Activated naive CD4-positive, alpha-beta T cell treated with anti-CD3 and anti-CD28 coated beads, Interleukin-2, amount 10 ng/mL, durations not matched to agents 7 days and 5 days (primary cell): ENCODE measurements at regions of chr2 and their contacts with region 1.

Region 1: DNA sequence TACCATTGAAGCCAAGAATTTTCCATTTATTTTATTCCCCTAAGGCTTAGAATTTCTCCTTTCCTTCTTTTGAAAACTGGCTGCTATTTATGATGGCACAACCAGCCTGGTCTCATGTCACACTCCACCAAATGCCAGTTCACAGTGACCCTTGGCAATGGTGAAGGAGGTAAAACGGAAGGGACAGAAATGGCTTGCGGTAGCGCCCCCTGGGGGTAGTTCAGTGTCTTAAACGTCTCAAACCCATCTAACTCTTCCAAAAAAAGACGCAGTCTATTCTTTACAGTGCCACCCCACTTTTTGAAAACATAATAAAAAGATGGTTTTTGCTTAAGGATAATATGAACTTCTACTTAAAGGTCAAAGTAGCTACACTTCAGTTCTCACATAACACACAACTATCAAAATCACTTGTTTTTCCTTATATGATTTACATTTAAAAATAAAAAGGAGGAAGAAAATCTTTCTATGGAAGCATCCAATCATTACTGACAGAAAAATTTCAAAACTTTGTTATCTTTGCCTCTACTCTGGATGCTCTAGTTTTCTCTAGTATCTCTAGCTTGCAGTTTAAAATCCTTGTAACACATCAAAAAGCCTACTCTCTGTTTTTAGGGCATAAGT is 28.0 kb downstream of the PNO1 start:
- DNase-seq: peak; percentile 67
- H3K4me3 Mint-ChIP-seq: no peak overlapping the region
- H3K27ac Mint-ChIP-seq: peak overlapping the region; percentile 42
- H3K4me1 Mint-ChIP-seq: peaks cover 12% of the 10 kb centered on the region
- H3K27me3 Mint-ChIP-seq: no peaks in the 10 kb centered on the region

Region 2: DNA sequence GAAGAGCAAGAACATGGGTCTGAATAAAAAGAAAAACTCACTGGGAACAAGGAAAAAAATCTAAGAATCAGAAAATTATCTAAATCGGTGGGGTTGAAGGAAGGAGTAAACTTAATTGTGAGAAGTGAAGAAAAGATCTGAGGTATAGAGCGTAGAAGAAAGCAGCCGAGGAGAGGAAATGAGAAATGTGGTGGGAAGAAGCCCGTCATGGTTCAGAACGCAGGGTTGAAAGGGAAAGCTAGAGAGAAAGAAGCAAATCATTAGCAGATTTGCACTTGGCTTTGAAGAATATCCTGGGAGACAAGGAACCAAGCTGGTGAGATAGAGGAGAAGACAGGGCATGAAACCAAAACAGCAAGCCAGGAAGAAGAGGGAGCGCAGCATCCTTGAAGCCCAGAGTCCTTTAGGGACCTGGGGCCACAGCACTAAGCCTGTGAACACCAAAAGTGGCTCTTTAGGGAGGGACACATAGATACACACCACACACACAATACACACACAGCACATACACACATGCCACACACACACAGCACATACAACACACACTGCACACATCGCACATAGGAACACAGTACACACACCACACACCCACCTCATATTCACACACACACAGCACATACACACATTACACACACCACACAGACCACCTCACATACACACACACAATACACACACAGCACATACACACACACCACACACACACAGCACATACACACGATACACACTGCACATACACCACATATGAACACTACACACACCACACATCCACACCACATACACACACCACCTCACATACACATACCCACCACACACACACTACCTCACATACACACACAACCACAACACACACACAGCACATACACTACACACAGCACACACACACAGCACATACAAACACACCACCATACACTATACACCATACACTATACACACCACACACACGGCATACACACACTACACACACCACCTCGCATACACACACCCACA is 513.9 kb before region 1 on chr2:
- CTCF ChIA-PET with region 1: no interaction called
- DNase-seq: no peak
- H3K4me3 Mint-ChIP-seq: no peak overlapping the region
- H3K27ac Mint-ChIP-seq: no peak overlapping the region
- H3K4me1 Mint-ChIP-seq: no peaks in the 10 kb centered on the region
- H3K27me3 Mint-ChIP-seq: no peaks in the 10 kb centered on the region

Region 3: DNA sequence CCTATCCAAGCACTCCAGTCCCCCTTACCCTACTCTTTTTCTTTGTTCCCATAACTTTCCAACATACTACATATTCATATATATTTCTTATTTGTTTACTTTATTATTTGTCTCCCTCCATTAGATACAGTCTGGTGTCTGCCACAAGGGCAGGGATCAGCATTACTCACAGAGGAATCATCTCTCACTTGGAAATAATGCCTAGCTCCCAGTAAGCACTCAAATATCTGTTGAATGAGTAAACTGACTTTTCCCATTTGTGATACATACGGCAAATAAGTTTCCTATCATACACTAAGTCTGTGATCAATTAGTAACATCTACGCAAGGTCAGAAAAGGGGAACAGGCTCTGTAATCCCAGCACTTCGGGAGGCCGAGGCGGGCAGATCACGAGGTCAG is 141.6 kb before region 1 on chr2:
- CTCF ChIA-PET with region 1: no interaction called
- DNase-seq: no peak
- H3K4me3 Mint-ChIP-seq: no peak overlapping the region
- H3K27ac Mint-ChIP-seq: no peak overlapping the region
- H3K4me1 Mint-ChIP-seq: no peaks in the 10 kb centered on the region
- H3K27me3 Mint-ChIP-seq: no peaks in the 10 kb centered on the region

Region 4: DNA sequence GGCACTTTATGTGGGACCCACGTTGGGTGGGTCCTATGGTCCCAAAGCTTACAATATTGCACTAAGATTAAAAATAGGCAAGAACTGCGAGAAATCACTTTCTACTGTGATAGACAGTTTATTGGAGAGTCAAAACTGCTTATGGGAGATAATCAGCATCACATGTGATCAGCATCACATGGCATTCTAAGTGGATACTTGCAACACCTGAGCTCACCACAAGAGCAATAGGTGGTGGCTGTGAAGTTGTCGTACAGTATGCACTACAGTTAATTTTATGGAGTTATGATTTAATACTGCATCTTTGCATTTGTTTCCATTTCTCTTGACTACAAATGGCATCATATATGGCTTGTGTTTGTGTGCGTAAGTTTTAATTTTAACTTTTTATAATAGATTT is 16.4 kb before region 1 on chr2:
- CTCF ChIA-PET with region 1: interaction called, 12 read pairs
- DNase-seq: no peak
- H3K4me3 Mint-ChIP-seq: no peak overlapping the region
- H3K27ac Mint-ChIP-seq: no peak overlapping the region
- H3K4me1 Mint-ChIP-seq: peaks cover 10% of the 10 kb centered on the region
- H3K27me3 Mint-ChIP-seq: no peaks in the 10 kb centered on the region

Region 5: DNA sequence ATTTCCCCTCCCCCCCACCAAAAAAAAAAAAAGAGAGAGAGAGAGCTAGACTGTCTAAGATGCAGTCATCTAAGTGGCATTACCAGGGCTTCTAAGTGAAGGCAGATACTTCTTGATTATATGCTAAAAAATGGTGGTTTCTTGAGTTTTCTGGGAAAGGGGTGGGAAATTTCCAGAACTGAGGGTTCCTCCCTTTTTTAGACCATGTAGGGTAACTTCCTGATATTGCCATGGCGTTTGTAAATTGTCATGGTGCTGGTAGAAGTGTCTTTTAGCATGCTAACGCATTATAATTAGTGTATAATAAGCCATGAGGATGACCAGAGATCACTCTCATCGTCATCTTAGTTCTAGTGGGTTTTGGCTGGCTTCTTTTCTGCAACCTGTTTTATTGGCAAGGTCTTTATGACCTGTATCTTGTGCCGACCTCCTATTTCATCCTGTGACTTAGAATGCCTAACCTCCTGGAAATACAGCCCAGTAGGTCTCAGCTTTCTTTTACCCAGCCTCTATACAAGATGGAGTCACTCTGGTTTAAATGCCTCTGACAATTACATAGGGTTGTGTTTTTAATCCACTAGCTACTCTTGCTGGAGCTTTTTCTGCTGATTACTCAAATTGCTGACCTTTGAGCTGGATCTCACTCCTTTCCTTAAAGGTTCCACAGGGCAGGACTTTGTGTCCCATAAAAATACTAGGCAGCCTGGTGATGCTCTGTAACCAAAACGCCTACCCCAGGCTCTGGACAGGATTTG is 427.3 kb after region 1 on chr2:
- CTCF ChIA-PET with region 1: no interaction called
- DNase-seq: no peak
- H3K4me3 Mint-ChIP-seq: no peak overlapping the region
- H3K27ac Mint-ChIP-seq: no peak overlapping the region
- H3K4me1 Mint-ChIP-seq: no peaks in the 10 kb centered on the region
- H3K27me3 Mint-ChIP-seq: no peaks in the 10 kb centered on the region